PC-9 (cell line): ENCODE measurements at regions of chr2 and their contacts with region 1.

Region 1: DNA sequence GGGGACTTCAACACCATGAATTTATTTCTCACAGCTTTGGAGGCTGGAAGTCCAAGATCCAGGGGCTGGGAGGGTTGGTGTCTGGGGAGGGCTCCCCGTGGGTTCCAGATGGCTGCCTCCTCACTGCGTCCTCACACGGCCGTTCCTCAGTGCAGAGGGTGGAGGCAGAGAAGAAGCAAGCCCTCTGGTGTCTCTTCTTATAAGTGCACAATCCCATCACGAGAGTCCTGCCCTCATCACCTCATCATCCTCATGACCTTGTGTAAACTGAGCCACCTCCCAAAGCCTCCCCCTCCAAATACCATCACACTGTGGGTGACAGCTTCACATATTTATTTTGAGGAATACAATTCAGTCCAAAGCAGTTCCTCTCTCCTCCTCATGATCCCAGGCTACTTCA is 26.3 kb downstream of the TMEM163 start:
- DNase-seq: no peak
- H3K4me3 ChIP-seq: no peak overlapping the region
- H3K27ac ChIP-seq: no peak overlapping the region
- H3K4me1 ChIP-seq: peaks cover 3% of the 10 kb centered on the region
- H3K27me3 ChIP-seq: no peaks in the 10 kb centered on the region
- CTCF ChIP-seq: no peak

Region 2: DNA sequence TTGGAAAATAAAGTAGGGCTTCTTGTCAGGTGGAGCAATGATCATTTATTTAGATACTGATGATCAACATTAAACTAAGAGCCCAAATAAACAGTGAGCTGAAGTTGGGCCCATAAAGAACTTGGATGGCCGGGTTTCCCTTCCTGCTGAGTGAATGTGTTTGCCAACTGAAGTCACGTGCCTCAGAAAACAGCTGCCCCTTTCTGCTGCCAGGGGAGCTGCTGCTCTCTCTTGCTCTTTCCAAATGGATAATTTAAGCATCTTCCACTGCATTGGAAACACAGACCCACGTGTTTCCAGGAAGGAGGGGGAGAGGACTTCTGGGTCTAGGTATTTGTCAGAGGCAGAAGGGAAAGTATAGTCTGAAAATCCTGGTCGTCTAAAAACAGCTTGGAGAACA is 1101.3 kb before region 1 on chr2:
- CTCF ChIA-PET with region 1: no interaction called
- POLR2A ChIA-PET with region 1: no interaction called
- intact Hi-C with region 1: no loop called
- DNase-seq: no peak
- H3K4me3 ChIP-seq: no peak overlapping the region
- H3K27ac ChIP-seq: no peak overlapping the region
- H3K4me1 ChIP-seq: no peaks in the 10 kb centered on the region
- H3K27me3 ChIP-seq: peaks cover 56% of the 10 kb centered on the region
- CTCF ChIP-seq: no peak

Region 3: GRCh38 chr2:134799936-134800335 is 107.4 kb after region 1 on chr2:
- CTCF ChIA-PET with region 1: no interaction called
- POLR2A ChIA-PET with region 1: interaction called, 10 read pairs
- intact Hi-C with region 1: no loop called
- DNase-seq: no peak
- H3K4me3 ChIP-seq: no peak overlapping the region
- H3K27ac ChIP-seq: no peak overlapping the region
- H3K4me1 ChIP-seq: no peaks in the 10 kb centered on the region
- H3K27me3 ChIP-seq: no peaks in the 10 kb centered on the region
- CTCF ChIP-seq: no peak

Region 4: DNA sequence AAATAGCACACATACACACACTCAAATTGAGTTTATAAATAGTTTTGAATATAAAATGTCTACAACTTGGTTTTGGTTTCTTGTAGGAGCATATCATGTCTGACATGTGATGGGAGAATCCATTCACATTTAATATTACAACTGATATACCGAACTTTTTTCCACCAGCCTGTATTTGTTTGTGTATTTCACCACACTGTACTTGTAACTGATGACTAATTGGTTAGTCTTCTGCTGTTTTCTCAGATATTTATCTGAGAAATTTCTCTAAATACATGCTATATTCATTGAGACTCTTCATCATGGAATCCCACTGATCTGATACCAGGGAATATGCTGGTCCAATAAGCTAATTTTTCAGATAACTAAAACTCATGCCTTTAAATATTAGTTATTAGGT is 992.9 kb after region 1 on chr2:
- CTCF ChIA-PET with region 1: no interaction called
- POLR2A ChIA-PET with region 1: no interaction called
- intact Hi-C with region 1: no loop called
- DNase-seq: peak in 1 of 2 experiments; percentile 38
- H3K4me3 ChIP-seq: no peak overlapping the region
- H3K27ac ChIP-seq: no peak overlapping the region
- H3K4me1 ChIP-seq: 0 out of 2 replicates have a peak, but pooled peaks cover 6% of the 10 kb centered on the region
- H3K27me3 ChIP-seq: no peaks in the 10 kb centered on the region
- CTCF ChIP-seq: no peak